Aorta (tissue), 5 donors: ENCODE measurements at regions of chr4 and their contacts with region 1.

Region 1: DNA sequence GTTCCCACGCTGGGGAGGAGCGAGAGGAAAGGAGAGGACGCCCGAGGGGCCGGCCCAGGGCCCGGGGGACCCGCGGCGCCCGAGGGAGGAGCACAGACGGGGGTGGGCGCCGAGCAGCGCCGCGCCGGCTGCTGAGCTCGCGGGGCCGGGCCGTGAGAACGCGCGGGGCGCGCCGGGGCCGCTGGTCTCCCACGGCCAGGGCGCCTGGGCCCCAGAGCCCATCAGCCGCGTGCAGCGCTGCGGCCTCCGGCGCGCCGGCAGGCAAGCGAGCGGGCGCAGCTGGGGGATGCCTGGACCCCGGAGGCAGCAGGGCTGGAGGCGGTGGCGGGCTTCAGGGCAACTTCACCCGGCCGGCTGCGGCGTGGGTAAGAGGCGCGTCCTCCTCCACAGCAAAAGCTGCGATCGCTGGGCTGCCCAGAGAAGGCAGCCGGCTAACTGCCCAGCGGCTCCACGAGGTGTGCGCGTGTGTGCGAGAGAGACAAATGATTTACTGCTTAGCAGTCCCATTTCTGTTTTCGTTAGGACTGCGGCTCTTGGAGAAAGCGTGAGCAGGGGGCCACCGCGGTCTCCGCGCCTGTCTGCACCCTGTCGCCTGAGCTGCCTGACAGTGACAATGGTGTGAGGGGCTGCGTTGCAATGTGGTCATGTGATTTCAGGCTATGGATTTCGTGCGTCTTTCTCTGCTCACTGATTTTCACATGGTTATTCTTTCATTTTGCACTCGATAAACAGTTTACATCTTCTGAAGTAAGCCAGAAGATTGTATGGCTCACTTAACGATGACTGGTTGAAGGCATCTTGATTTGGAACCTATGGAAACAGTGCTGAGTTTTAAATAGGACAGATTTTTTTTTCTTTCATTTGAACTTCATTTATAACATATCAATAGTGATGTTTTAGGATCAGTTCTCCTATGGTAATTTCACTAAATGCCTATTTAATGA is 1.2 kb downstream of the GUCY1A1 start:
- DNase-seq: peak; percentile 75 to 86
- ATAC-seq: peak; percentile 85
- H3K4me3 ChIP-seq: peak overlapping the region; percentile 46 to 72
- H3K27ac ChIP-seq: peak overlapping the region; percentile 58 to 85
- H3K4me1 ChIP-seq: peaks cover 2% of the 10 kb centered on the region in 2 donors
- H3K27me3 ChIP-seq: no peaks in the 10 kb centered on the region

Region 2: GRCh38 chr4:155442267-155443105 is 225.4 kb before region 1 on chr4:
- intact Hi-C with region 1: loop called (anchors 5 kb)
- DNase-seq: peak; percentile 85 to 95
- ATAC-seq: peak; percentile 95
- H3K4me3 ChIP-seq: peak overlapping the region in 1 of 2 donors; percentile 51
- H3K27ac ChIP-seq: no peak overlapping the region
- H3K4me1 ChIP-seq: no peaks in the 10 kb centered on the region
- H3K27me3 ChIP-seq: no peaks in the 10 kb centered on the region

Region 3: GRCh38 chr4:155529272-155529671 is 138.6 kb before region 1 on chr4:
- intact Hi-C with region 1: loop called in 1 of 2 experiments (anchors 10 kb)
- DNase-seq: no peak
- ATAC-seq: no peak
- H3K4me3 ChIP-seq: no peak overlapping the region
- H3K27ac ChIP-seq: no peak overlapping the region
- H3K4me1 ChIP-seq: no peaks in the 10 kb centered on the region
- H3K27me3 ChIP-seq: no peaks in the 10 kb centered on the region

Region 4: GRCh38 chr4:155552180-155552579 is 115.7 kb before region 1 on chr4:
- intact Hi-C with region 1: no loop called
- DNase-seq: no peak
- ATAC-seq: peak; percentile 11
- H3K4me3 ChIP-seq: no peak overlapping the region
- H3K27ac ChIP-seq: no peak overlapping the region
- H3K4me1 ChIP-seq: no peaks in the 10 kb centered on the region
- H3K27me3 ChIP-seq: no peaks in the 10 kb centered on the region

Region 5: GRCh38 chr4:155722816-155723499 is 55.1 kb after region 1 on chr4:
- intact Hi-C with region 1: no loop called
- DNase-seq: no peak
- ATAC-seq: no peak
- H3K4me3 ChIP-seq: no peak overlapping the region
- H3K27ac ChIP-seq: no peak overlapping the region
- H3K4me1 ChIP-seq: no peaks in the 10 kb centered on the region
- H3K27me3 ChIP-seq: no peaks in the 10 kb centered on the region

Region 6: GRCh38 chr4:155758481-155759404 is 90.9 kb after region 1 on chr4 and contains the start of gene GUCY1B1:
- intact Hi-C with region 1: loop called in 1 of 2 experiments (anchors 2 kb)
- DNase-seq: peak; percentile 97
- ATAC-seq: peak; percentile 98
- H3K4me3 ChIP-seq: peak within 1 kb of the TSS; percentile 48 to 85
- H3K27ac ChIP-seq: peak within 1 kb of the TSS; percentile 53
- H3K4me1 ChIP-seq: no peaks in the 10 kb centered on the region
- H3K27me3 ChIP-seq: no peaks in the 10 kb centered on the region
- total RNA-seq, gene GUCY1B1: 24.9 to 26.4 TPM

Region 7: GRCh38 chr4:155777971-155778735 is 110.3 kb after region 1 on chr4:
- intact Hi-C with region 1: loop called in 1 of 2 experiments (anchors 5 kb)
- DNase-seq: no peak
- ATAC-seq: peak; percentile 77
- H3K4me3 ChIP-seq: no peak overlapping the region
- H3K27ac ChIP-seq: peak overlapping the region in 1 of 2 donors; percentile 43
- H3K4me1 ChIP-seq: peaks cover 1 to 4% of the 10 kb centered on the region in 2 donors
- H3K27me3 ChIP-seq: no peaks in the 10 kb centered on the region